ENCODE measurements at regions of chr5 and their contacts with region 1.

Region 1: DNA sequence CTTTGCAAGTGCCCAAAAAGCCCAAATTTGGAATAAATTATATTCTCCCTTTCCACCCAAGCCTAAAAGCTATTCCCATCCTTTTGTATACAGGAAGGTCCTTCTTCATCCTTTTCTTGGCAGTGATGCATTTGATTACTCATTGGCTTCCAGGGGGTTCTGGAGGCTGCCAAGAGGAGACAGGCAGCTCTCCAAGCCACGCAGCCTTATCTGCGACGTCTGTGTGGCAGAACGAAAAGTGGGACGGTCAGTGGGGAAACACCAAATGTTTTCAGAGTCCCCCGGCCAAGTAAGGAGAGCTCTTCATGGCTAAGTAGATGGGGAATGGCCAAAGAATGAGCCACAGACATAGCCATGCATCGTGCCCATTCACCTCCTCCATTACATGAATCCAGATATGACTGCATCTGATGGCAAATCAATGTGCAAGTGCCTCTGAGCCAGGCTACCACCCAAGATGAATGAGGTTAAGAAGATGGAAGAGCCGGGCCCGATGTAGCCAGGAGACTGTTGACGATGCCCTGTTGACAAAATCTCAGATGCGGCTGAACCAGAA is 12.1 kb downstream of the ADAM19 start:
- DNase-seq: peak; percentile 78
- ATAC-seq: peak; percentile 68 to 77

Region 2: DNA sequence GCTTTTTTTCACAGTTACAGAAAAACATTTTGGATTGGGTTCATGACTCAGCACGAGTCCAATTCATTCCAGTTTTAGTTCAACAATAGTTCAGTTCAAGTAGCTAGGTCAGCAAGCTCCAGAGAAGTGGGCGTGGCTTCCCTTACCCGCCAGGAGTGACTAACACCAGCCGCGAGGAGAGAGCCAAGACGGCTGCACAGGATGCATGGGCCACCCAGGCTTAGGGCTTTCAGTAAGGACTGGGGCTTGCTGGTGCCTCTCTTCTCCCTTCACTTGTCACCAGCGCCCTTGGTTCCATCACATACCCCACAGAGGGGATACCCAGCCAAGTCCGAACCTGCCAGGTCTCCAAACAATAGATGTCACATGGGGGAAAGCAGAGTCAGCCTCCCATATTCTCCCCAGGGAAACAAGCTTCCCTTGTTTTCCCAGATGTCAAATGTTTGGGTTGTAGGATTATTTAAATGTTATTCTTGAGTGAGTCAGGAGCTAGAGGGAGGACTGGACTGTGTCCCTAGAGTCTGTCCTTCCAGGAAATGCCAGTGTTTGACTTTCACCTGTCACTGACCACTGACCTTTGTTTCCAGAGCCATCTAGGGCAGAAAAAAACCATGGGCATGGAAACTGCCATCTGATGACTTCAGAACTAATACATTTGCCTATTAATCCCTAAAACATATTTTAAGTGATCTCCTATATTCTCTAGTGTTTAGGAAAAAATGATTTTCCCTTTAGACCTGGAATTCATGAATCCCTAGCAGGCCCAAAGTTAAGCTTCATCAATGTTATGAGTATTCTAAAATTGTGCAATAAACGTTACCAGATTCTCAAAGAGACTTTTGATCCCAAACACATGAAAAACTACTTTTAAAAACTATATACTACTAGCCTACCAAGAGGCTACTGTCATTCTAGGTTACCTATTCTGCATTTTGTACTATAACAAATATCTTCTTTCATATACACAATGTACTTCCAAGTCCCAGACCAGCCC is 51.5 kb before region 1 on chr5:
- intact Hi-C with region 1: loop called in 1 of 2 experiments (anchors 5 kb)
- DNase-seq: peak; percentile 95
- ATAC-seq: peak; percentile 94 to 95

Region 3: DNA sequence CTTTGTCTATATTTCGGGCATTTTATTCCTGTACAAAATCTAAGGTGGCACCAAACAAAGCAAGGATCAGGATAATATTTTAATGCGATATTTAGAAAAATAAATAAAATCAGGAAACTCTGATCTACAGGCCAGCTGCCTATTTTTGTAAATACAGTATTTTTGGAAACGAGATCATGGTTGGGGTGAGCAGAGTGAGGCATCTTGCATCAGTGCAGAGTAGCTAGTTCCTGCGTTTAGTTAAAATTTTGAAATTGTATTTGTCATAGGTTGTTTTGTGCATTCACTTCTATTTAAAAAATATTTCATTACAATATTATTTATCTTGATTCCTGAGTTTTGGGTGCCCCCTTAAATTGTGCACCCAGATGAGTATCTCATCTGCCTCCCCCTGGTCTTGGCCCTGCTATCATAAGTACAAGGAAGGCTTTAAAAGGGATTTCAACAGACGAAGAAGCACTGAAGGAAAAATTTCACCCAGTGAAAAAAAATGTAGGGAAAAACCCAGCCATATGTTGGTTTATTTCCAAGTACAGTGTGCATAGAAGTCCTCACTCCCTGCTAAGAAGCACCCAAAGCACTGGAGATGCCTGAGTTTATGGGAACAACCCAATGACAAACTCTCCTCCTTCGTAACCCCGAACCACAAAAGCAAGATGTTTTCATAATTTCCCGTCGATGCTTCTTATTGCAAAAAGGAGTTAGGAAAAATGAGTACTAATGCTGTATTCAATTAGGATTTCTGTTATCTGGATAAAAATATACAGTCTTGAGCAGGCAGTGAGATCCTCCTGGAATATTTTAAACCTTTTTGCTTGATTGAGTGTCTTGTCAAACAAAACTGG is 600.2 kb after region 1 on chr5:
- intact Hi-C with region 1: no loop called
- DNase-seq: no peak
- ATAC-seq: no peak

Measured in left cardiac atrium (tissue), 4 donors.